Sigmoid colon (tissue), 7 donors: ENCODE measurements at regions of chr4 and their contacts with region 1.

Region 1: GRCh38 chr4:165207431-165208220 is at the start of gene KLHL2:
- DNase-seq: peak; percentile 88
- H3K4me3 ChIP-seq: peak within 1 kb of the TSS; percentile 47 to 97 (median 93)
- H3K27ac ChIP-seq: peak within 1 kb of the TSS; percentile 81 to 93 (median 88)
- H3K4me1 ChIP-seq: peaks cover 0 to 25% (median 22%) of the 10 kb centered on the region in 4 donors
- H3K27me3 ChIP-seq: no peaks in the 10 kb centered on the region
- CTCF ChIP-seq: no peak
- EP300 ChIP-seq: no peak
- POLR2A ChIP-seq: no peak
- total RNA-seq, gene KLHL2: 14.4 to 25.7 (median 18.8) TPM

Region 2: GRCh38 chr4:165327211-165328100 is 119.8 kb after region 1 on chr4 and contains the start of gene MSMO1:
- intact Hi-C with region 1: loop called (anchors 1 kb)
- DNase-seq: peak; percentile 99
- H3K4me3 ChIP-seq: peak within 1 kb of the TSS; percentile 78 to 98 (median 92)
- H3K27ac ChIP-seq: peak within 1 kb of the TSS; percentile 79 to 84 (median 82)
- H3K4me1 ChIP-seq: peaks cover 4 to 20% (median 14%) of the 10 kb centered on the region in 4 donors
- H3K27me3 ChIP-seq: no peaks in the 10 kb centered on the region
- CTCF ChIP-seq: no peak
- EP300 ChIP-seq: no peak
- POLR2A ChIP-seq: peak; percentile 27 to 70
- total RNA-seq, gene MSMO1: 13.6 to 26.8 (median 17.1) TPM